GM18951 (cell line): ENCODE measurements at regions of chr18 and their contacts with region 1.

Region 1: GRCh38 chr18:51110073-51110803 is 80.2 kb downstream of the SMAD4 start:
- POLR2A ChIP-seq: no peak

Region 2: GRCh38 chr18:50967714-50968661 is 142.2 kb before region 1 on chr18 and contains the start of gene ELAC1:
- in situ Hi-C with region 1: no loop called
- POLR2A ChIP-seq: peak; percentile 97

Region 3: DNA sequence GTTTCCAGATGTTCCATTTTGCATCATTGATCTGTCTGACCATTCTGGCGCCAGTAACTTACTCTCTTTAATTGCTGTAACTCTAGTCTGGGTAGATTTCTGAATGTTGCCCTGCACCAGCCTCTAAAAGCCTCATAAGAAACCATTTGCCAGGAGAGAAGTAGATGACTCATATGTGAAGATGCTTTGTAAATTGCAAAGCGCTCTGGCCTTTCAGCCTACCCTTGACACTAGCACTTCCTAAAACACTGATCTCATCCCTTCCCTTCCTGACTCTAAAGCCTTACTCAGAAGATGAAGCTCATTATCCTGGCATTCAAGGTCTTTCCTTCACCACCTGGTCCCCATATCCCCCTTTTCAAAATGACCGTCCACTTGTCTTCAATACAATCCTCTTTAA is 280.5 kb after region 1 on chr18:
- in situ Hi-C with region 1: loop called (anchors 25 kb)
- POLR2A ChIP-seq: no peak

Region 4: GRCh38 chr18:51621113-51621863 is 511.1 kb after region 1 on chr18:
- in situ Hi-C with region 1: loop called (anchors 25 kb)
- POLR2A ChIP-seq: no peak